Right ventricle myocardium inferior (tissue), 1 donor: ENCODE measurements at regions of chr11 and their contacts with region 1.

Region 1: DNA sequence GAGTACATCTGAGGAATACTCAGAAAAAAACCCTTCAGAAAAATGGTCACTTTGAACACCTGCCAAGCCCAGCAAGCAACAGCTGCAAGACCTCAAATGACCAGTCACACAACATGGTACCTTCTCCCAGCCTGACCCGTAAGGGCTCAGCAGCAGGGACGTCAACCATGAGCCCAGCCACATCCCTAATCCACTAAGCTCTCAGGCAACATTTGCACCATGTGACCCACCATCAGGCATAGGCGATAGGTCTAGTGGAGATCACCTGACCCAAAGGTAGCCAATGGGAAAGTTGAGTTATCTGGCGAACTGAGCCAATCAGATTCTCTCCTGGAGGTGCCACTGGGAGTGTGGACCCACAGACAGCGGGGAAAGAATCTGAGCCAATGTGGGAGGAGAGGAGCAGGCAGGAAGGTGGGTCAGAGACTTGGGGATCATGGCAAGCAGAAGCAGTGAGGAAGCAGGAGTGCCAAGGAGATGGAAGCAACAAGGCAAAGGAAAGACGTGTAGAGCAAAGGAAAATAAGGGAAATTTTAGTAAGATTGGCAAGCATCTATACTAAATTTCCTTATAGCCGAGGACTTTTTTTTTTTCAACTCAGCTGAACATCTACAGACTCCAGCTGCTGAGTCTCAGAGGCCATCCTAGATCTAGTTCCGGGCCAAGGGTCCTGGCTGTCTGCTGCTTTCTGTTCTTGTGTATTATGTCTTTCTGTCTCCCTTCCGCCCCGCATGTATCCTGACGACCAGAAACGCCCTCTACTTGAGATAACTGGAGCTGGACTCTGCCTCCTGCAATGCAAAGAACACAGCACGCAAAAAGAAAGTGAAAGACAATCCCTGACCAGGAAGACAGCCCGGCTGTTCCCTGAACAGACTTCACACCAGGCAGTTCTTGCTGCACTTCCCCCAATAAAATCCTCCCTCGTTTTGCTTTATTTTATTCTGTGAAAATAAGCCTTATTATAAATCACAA is 11.0 kb upstream of the PLAAT2 start:
- DNase-seq: no peak
- ATAC-seq: peak; percentile 80

Region 2: GRCh38 chr11:63613517-63614135 is 39.5 kb after region 1 on chr11:
- intact Hi-C with region 1: loop called (anchors 2 kb)
- DNase-seq: peak; percentile 77
- ATAC-seq: peak; percentile 57